Posterior vena cava (tissue), 2 donors: ENCODE measurements at regions of chr20 and their contacts with region 1.

Region 1: GRCh38 chr20:22020201-22020600 is 314.7 kb downstream of the PAX1 start:
- DNase-seq: no peak

Region 2: GRCh38 chr20:21693322-21693721 is 326.9 kb before region 1 on chr20:
- intact Hi-C with region 1: no loop called
- DNase-seq: no peak

Region 3: DNA sequence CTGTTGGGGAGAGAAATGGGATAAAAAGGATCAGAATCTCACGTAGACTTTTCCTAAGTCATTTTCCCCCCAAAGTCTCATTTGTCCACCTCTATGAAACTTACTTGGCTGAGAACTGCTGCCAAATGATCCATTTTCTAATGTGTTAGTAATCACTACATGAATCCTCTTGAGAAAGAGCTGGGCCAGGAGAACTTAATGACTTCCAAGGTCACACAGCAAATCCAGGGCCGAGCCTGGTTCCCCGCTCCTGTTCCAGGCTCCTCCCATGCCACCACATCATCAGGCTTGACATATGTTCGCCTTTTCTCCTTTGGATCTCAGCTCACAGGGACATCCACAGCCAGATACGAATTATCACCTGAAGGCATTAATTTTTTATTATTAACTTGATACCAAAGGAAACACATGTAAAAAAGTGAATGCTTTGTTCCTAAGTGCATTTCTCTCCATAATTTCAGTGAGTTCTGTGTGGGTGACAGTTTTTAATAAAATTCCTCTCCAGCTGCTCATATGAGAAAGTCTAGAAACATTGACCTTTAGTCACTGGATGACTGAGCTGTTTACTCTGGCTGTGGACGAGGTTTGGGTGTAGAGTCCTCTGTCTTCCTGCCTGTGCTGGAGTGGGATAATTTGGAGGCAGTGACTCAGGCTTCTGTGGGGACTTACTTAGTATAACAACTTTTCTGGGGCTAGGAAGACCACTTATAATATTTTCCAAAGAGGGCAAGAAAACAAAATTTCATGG is 38.4 kb before region 1 on chr20:
- intact Hi-C with region 1: loop called in 1 of 2 experiments (anchors 1 kb)
- DNase-seq: no peak

Region 4: GRCh38 chr20:22160253-22160652 is 140.1 kb after region 1 on chr20:
- intact Hi-C with region 1: loop called in 1 of 2 experiments (anchors 10 kb)
- DNase-seq: no peak